ENCODE measurements at regions of chr4 and their contacts with region 1.

Region 1: DNA sequence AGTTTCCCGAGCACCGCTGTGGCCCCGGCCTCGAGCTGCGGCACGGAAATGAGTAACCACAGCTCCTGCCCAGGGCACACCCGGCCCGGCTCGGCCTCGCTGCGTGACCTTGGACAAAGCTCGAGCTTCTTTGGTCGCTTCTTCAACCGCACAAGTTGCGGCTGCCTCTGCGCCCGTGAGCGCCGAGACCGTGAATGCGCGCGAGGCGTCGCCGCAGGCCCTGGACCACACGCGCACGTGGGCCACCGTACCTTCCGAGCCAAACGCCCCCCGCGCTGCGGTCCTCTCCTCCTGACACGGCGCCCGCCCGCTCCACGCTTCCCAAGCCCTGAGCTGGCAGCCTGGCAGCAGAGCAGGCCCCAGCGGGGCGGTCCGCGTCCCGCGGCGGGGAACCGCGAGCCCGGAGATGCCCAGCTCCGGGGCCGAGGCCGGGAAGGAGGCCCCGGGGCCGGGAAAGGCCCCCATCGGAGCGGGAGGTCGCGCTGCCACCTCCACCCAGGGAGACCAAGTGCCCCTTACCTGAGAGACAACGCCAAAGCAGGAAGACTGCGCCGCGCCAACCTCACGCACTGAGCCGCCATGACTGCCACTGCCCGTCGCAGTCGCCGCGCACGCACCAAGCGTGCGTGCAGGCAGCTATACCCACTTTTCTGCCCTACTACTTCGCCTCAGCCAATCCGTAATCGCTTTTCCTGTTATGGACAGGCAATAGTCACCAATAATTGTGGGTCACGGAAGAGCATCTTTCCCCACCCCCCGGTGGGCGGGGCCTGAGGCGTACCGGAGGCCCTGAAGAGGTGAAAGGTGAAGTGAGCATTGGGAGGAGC is at the start of gene GRPEL1:
- DNase-seq: peak; percentile 100
- ATAC-seq: peak; percentile 99
- total RNA-seq, gene GRPEL1: 20.6 TPM

Region 2: GRCh38 chr4:6709230-6710114 is 358.2 kb before region 1 on chr4 and contains the start of gene MRFAP1L1:
- intact Hi-C with region 1: loop called (anchors 10 kb)
- DNase-seq: peak; percentile 98
- ATAC-seq: peak; percentile 97
- total RNA-seq, gene MRFAP1L1: 46.0 TPM

Region 3: GRCh38 chr4:6855692-6856297 is 211.9 kb before region 1 on chr4:
- intact Hi-C with region 1: no loop called
- DNase-seq: no peak
- ATAC-seq: peak; percentile 53

Region 4: DNA sequence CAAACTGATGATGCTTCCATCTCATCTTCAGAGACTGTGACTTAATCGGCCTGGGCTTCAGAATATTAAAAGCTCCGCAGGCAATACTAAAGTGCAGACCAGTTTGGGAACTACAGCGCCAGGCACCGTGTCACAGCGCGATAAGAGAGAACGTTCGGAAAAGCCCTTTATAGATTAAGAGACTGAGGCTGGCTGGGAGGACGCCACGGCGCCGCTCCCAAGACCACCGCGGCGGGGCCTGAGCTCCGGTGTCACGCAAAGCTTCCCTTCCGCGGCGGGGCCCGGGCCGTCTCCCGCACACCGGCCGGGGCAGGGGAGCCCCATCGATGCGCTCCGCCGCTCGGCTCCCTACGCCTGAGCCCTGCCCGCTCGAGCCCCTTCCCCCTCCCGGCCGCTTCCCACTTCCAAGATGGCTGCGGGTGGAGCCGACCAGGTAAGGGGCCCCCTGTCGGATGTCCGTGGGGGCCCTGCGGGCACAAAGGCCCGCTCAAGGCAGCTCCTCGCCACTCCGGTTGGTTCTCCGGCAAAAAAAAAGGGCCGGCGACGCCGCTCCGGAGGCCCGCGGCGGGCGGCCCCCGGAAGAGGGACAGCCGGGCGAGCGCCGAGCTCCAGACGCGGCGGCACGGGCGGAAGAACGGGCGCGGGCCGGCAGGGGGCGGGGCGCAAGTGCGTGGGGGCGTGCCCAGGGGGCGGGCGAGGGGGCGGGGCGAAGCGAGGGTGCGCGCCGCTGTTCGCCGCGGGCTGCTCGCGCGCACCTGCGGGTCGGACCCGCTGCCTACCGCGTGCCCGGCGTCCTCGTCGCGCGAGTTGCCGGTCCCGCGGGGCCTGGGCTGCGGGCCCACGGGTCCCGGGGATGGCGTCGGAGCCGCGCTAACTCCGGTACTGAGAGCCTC is 158.3 kb before region 1 on chr4 and contains the start of gene TBC1D14:
- intact Hi-C with region 1: loop called (anchors 10 kb)
- DNase-seq: peak; percentile 92
- ATAC-seq: peak; percentile 95
- total RNA-seq, gene TBC1D14: 68.2 TPM

Region 5: DNA sequence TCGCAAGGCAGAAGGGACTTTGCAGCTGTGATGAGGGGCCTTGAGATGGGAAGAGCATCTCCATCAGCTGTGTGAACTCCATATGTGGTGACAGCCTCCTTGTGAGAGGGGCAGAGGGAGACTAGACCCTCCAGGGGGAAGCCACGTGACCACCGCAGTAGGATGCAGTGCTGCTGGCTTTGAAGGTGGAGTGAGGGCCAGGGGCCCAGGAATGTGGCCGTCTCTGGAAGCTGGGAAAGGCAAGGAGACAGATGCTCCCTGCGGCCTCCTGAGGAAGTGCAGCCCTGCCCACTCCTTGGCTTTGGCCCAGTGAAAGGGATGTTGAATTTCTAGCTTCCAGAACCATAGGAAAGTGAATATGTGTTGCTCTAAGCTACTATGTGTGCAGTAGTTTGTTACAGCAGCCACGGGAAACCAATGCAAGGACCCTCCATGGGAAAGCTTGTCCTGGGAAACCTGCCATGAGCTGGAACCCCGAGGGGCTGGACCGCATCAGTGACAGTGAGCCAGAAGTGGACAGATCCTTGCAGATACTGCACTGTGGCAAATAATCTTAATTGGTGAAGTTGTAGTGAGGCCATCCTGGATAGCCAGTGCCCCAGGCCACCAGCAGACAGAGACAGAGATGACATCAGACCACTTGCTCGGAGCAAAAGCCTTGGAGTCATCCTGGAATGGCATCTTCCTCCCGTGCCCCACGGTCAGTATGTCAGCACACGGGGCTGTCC is 89.3 kb after region 1 on chr4:
- intact Hi-C with region 1: no loop called
- DNase-seq: peak; percentile 68
- ATAC-seq: peak; percentile 76

Measured in sciatic nerve (tissue), 2 donors.